GM10248 (cell line): ENCODE measurements at regions of chr6 and their contacts with region 1.

Region 1: GRCh38 chr6:32947552-32948465 is 5.1 kb downstream of the HLA-DMA start:
- DNase-seq: no peak
- CTCF ChIP-seq: peak; percentile 82

Region 2: DNA sequence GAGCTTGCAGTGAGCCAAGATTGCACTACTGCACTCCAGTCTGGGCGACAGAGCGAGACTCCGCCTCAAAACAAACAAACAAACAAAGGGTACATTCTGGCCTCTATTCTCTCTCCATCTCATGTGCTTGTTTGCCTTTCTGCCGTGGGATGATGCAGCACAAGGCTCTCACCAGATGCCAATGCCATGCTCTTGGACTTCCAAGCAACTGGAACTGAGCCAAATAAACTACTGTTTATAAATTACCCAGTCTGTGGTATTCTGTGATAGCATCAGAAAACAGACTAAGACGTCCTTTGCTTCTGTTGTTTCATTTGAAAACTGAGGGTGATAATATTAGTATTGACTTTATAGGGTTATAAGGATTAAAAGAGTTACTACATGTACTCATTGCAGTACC is 17.0 kb after region 1 on chr6:
- CTCF ChIA-PET with region 1: interaction called, 379 read pairs
- POLR2A ChIA-PET with region 1: interaction called, 219 read pairs
- DNase-seq: no peak
- CTCF ChIP-seq: no peak